Activated T-helper 1 cell treated with anti-CD3 and anti-CD28 coated beads, Interleukin-12 subunit alpha, Interleukin-12 subunit beta, Interleukin-2, Interleukin-4 antibody, amounts not matched to agents 30 ng/mL and 10 ng/mL and 1 ng/mL, durations not matched to agents 14 hours and 24 hours and 36 hours (primary cell): ENCODE measurements at regions of chr10 and their contacts with region 1.

Region 1: GRCh38 chr10:5844345-5845048 is 31.3 kb upstream of the GDI2 start:
- DNase-seq: no peak
- H3K4me3 Mint-ChIP-seq: no peak overlapping the region
- H3K27ac Mint-ChIP-seq: no peak overlapping the region
- H3K4me1 Mint-ChIP-seq: peaks cover 19% of the 10 kb centered on the region
- H3K27me3 Mint-ChIP-seq: peaks cover 1% of the 10 kb centered on the region

Region 2: GRCh38 chr10:5512881-5513612 is 331.4 kb before region 1 on chr10:
- intact Hi-C with region 1: no loop called
- DNase-seq: no peak
- H3K4me3 Mint-ChIP-seq: no peak overlapping the region
- H3K27ac Mint-ChIP-seq: no peak overlapping the region
- H3K4me1 Mint-ChIP-seq: peaks cover 10% of the 10 kb centered on the region
- H3K27me3 Mint-ChIP-seq: peaks cover 32% of the 10 kb centered on the region

Region 3: DNA sequence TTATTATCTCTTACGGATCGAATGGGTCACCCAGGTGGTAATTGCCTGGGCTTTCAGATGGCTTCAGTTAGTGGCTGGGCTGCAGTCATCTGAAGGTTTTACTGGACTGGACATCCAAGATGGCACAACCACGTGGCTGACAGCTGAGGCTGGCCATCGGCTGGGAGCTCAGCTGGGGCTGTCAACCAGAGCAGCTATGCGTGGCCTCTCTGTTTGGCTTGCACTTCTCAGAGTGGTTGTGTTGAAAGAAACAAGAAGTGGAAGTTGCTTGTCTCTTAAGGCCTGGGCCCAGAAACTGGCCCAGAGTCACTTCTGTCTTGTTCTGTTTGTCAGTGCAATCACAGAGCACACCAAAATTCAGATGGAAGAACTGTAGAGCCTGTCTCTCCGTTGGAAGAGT is 25.6 kb before region 1 on chr10:
- intact Hi-C with region 1: loop called (anchors 1 kb)
- DNase-seq: no peak
- H3K4me3 Mint-ChIP-seq: no peak overlapping the region
- H3K27ac Mint-ChIP-seq: no peak overlapping the region
- H3K4me1 Mint-ChIP-seq: peaks cover 51% of the 10 kb centered on the region
- H3K27me3 Mint-ChIP-seq: no peaks in the 10 kb centered on the region

Region 4: DNA sequence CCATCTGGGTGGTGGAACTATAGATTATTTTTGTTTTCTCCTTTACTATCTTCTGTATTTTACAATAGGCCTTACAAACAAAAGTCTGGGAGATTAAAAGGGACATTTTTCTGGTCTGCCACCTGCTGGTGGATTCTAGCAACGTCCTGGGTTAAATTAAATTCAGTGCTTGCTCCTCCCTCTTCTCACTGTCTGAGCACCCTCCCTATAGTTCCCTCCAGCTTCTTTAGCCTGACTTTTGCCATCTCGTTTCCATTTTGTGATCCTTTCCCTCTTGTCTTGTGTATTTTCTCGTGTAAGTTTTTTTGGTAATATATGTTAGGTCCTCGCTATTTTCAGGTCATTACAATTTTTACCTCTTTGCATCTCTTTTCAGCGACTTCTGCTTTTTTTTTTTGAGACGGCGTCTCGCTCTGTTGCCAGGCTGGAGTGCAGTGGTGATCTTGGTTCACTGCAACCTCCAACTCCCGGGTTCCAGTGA is 29.1 kb after region 1 on chr10:
- intact Hi-C with region 1: loop called (anchors 1 kb)
- DNase-seq: peak; percentile 59
- H3K4me3 Mint-ChIP-seq: peak overlapping the region; percentile 43
- H3K27ac Mint-ChIP-seq: no peak overlapping the region
- H3K4me1 Mint-ChIP-seq: peaks cover 6% of the 10 kb centered on the region
- H3K27me3 Mint-ChIP-seq: no peaks in the 10 kb centered on the region